ENCODE measurements at regions of chr13 and their contacts with region 1.

Region 1: DNA sequence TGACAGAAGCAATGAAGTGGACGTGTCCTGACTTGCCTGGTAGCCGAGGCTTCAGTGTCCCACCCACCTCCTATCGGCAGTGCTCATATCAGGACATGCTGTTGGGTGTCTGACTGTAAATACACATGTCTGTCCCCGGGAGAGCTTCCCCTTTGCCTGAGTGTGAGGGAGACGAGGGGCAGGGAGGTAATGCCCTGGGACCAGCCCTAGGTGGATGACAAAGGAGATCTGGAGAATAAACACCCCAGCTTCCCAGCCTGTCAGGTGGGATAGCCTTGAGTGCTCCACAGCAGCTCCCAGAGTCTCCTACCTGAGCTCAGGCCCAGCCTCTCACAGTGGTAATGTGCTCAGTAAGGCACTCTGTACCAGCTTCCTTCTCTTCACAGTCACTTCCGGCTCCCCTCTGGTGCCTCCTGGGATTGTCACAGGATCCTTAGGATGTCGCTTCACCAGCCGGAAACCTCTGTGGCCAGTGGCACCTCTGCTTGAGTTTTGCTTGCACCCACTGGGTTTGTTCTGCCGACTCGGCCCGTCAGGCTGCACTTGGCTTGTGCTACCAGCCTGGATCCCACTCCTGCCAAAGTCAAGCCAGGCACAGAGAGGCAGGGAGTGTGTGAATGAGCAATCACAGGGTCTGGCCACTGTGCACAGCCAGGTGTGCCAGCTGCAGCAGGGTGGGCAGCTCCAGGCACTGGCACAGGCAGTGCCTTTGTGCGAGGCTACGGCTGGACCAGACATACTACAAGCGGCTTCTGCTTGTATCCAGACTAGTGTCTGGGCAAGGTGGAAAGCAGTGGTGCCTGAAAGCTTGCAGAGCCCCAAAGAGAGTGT is 54.5 kb upstream of the RGCC start:
- DNase-seq: no peak
- H3K4me3 Mint-ChIP-seq: no peak overlapping the region
- H3K27ac Mint-ChIP-seq: no peak overlapping the region
- H3K4me1 Mint-ChIP-seq: no peaks in the 10 kb centered on the region
- H3K27me3 Mint-ChIP-seq: no peaks in the 10 kb centered on the region

Region 2: GRCh38 chr13:41427666-41428065 is 24.8 kb after region 1 on chr13:
- CTCF ChIA-PET with region 1: interaction called, 3 read pairs
- POLR2A ChIA-PET with region 1: no interaction called
- intact Hi-C with region 1: loop called (anchors 1 kb)
- DNase-seq: no peak
- H3K4me3 Mint-ChIP-seq: peak overlapping the region; percentile 15
- H3K27ac Mint-ChIP-seq: no peak overlapping the region
- H3K4me1 Mint-ChIP-seq: peaks cover 4% of the 10 kb centered on the region
- H3K27me3 Mint-ChIP-seq: peaks cover 6% of the 10 kb centered on the region

Measured in activated CD4-positive, alpha-beta memory T cell treated with anti-CD3 and anti-CD28 coated beads for 36 hours (primary cell).